Endothelial cell of umbilical vein (primary cell): ENCODE measurements at regions of chr9 and their contacts with region 1.

Region 1: DNA sequence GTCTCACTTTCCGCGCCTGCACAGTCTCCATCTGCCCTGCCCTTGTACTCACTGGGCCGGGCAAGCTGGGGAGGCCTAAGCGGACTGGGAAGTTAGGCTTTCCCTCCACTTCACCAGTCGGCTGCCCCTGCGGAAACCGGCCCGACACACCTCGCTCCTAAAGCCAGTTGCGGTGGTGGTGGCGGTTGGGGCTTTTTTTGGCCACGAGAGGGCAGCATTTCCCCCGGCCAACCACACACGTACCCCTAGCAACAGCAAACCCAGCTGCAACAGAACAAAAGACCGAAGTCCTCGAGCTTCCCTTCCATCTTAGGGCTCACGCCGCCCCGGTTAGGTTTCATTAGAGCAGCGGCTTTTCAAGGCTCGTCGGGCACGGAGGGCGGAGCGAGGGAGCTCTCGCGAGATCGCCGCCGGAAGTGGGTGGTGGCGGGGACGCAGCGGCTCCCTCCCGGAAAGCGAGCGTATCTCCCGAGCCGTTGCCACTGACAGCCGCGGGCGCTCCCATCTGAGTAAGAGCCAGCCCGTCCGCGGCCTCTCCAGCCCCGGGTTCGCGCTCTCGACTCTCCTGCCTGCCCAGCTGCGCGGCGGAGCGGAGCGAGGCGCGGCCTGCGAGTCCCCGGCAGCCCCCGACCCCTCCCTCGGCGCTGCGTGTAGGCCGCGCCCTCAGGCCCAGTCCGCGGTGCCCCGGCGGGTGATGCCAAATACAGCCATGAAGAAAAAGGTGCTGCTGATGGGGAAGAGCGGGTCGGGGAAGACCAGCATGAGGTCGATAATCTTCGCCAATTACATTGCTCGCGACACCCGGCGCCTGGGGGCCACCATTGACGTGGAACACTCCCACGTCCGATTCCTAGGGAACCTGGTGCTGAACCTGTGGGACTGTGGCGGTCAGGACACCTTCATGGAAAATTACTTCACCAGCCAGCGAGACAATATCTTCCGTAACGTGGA is at the start of gene RRAGA:
- DNase-seq: peak; percentile 97
- H3K4me3 ChIP-seq: peak within 1 kb of the TSS; percentile 48 to 76 (median 53)
- H3K27ac ChIP-seq: peak within 1 kb of the TSS; percentile 69
- H3K4me1 ChIP-seq: peaks cover 16% of the 10 kb centered on the region
- H3K27me3 ChIP-seq: no peaks in the 10 kb centered on the region
- CTCF ChIP-seq: peak; percentile 81 to 91
- POLR2A ChIP-seq: peak; percentile 97
- total RNA-seq, gene RRAGA: 78.5 and 81.2 TPM in 2 replicates

Region 2: DNA sequence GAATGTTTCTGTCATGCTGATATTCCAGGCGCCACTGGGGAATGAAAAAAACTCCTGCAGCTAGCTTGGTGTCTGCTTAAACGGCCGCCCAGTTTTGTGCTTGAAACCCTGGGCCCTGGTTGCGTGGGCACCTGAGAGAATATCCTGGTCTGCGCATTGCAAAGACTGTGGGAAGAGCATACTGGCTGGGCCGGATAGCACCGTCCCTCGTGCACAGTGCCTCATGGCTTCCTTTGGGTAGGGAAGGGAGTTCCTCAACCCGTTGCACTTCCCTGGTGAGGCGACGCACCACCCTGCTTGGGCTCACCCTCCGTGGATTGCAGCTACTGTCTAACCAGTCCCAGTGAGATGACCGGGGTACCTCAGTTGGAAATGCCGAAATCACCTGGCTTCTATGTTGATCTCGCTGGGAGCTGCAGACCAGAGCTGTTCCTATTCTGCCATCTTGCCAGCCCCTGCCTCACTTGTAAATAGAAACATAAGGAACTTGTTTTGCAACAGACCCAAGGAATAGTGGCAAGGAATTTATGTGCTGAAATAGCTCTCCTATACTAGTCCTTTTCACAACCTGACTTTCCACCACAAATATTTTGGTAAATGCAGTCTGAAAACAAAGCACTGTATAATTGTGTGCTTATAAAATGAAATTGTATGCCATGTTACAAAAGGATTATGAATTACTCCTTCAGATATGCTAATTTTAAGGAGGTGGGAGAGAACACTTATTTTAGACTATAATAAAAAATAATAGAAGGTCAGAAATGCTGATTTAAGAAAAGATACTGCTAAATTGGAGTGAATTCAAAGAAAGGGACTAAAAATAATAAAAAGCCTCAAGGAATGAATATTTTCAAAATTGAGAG is 485.0 kb before region 1 on chr9:
- CTCF ChIA-PET with region 1: no interaction called
- POLR2A ChIA-PET with region 1: no interaction called
- dilution Hi-C with region 1: no loop called
- intact Hi-C with region 1: no loop called
- DNase-seq: no peak
- H3K4me3 ChIP-seq: no peak overlapping the region
- H3K27ac ChIP-seq: no peak overlapping the region
- H3K4me1 ChIP-seq: peaks cover 20% of the 10 kb centered on the region
- H3K27me3 ChIP-seq: no peaks in the 10 kb centered on the region
- CTCF ChIP-seq: no peak
- POLR2A ChIP-seq: no peak

Region 3: GRCh38 chr9:18951936-18952335 is 97.3 kb before region 1 on chr9:
- CTCF ChIA-PET with region 1: no interaction called
- POLR2A ChIA-PET with region 1: no interaction called
- dilution Hi-C with region 1: no loop called
- intact Hi-C with region 1: no loop called
- DNase-seq: no peak
- H3K4me3 ChIP-seq: no peak overlapping the region
- H3K27ac ChIP-seq: no peak overlapping the region
- H3K4me1 ChIP-seq: no peaks in the 10 kb centered on the region
- H3K27me3 ChIP-seq: peaks cover 6% of the 10 kb centered on the region in 2 experiments
- CTCF ChIP-seq: no peak
- POLR2A ChIP-seq: no peak

Region 4: DNA sequence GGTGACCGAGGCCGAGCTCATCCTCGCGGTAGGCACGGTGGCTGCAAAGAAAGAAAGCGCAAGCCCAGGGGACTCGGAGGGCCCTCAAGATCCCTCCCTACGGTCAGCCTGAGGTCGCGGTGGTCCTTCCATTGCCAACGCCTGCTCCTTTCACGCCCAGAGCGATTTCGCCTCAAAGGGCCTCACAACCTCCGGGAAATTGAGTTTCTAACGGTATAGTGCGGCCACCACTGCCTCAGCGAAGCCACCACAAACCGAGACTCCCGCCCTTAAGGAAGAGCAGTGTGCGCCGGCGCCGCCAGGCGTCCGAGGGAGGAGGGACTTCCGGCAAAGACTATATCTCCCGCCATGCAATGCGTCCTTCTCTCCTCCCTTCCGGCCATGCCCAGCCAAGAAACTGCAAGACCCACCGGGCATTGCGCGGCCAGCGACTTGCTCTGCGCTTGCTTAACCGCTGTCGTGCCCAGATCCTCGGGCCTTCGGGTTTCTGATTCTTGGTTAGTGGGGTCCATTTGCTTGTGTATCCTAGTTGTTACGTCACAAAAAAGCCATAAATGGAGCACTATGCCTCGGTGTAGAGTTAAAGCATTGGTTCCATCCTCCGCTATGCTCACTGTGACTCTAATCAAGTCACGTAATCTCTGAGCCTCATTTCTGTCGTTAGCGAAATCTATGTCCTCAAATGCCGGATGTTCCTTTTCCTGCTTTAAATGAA is 53.5 kb after region 1 on chr9 and contains the start of gene HAUS6:
- CTCF ChIA-PET with region 1: interaction called, 4 read pairs
- POLR2A ChIA-PET with region 1: no interaction called
- dilution Hi-C with region 1: no loop called
- intact Hi-C with region 1: loop called (anchors 2 kb)
- DNase-seq: peak; percentile 98
- H3K4me3 ChIP-seq: peak within 1 kb of the TSS; percentile 85 to 93 (median 87)
- H3K27ac ChIP-seq: peak within 1 kb of the TSS; percentile 52
- H3K4me1 ChIP-seq: peaks cover 8% of the 10 kb centered on the region
- H3K27me3 ChIP-seq: no peaks in the 10 kb centered on the region
- CTCF ChIP-seq: peak; percentile 7 to 63
- POLR2A ChIP-seq: peak; percentile 85
- total RNA-seq, gene HAUS6: 18.9 and 19.6 TPM in 2 replicates

Region 5: GRCh38 chr9:19230356-19231125 is 181.3 kb after region 1 on chr9 and contains the start of gene DENND4C:
- CTCF ChIA-PET with region 1: interaction called, 4 read pairs
- POLR2A ChIA-PET with region 1: interaction called, 3 read pairs
- dilution Hi-C with region 1: no loop called
- intact Hi-C with region 1: loop called (anchors 1 kb)
- DNase-seq: peak; percentile 90
- H3K4me3 ChIP-seq: peak within 1 kb of the TSS; percentile 65 to 99 (median 97)
- H3K27ac ChIP-seq: peak within 1 kb of the TSS; percentile 86
- H3K4me1 ChIP-seq: peaks cover 19% of the 10 kb centered on the region
- H3K27me3 ChIP-seq: no peaks in the 10 kb centered on the region
- CTCF ChIP-seq: no peak
- POLR2A ChIP-seq: peak; percentile 87
- total RNA-seq, gene DENND4C: 36.5 and 36.8 TPM in 2 replicates

Region 6: DNA sequence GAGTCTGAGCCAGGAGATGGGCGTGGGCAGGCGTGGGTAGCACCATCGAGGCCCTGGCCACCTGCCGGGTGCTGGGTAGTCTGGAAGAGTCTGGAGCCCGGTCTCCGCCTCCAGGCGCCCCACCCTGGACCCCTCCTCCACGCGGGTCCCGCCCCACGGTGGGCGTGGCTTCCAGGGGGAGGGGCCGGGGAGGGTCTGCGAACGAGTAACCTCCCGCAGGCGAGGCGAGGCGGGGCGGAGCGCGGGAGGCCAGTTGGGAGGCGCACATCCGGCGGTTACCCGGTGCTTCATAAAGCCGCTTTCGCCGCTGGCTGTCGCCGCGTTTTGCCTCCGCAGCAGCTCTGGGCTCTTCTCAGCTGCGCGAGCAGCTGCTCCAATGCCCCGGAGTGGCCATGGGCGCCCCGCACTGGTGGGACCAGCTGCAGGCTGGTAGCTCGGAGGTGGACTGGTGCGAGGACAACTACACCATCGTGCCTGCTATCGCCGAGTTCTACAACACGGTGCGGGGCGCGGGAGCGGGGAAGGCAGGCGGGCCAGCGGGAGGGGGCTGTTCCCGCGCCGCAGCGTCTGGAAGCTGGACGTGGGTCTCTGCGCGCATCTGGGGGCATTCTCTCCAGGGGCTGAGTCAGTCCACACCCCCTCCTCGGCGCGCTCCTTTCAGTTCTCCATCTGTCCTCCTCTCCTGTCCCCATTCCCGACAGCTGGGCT is 359.6 kb after region 1 on chr9 and contains the start of gene ACER2:
- CTCF ChIA-PET with region 1: no interaction called
- POLR2A ChIA-PET with region 1: no interaction called
- dilution Hi-C with region 1: no loop called
- intact Hi-C with region 1: loop called (anchors 1 kb)
- DNase-seq: peak; percentile 95
- H3K4me3 ChIP-seq: peak within 1 kb of the TSS; percentile 82 to 91 (median 84)
- H3K27ac ChIP-seq: peak within 1 kb of the TSS; percentile 19
- H3K4me1 ChIP-seq: peaks cover 21% of the 10 kb centered on the region
- H3K27me3 ChIP-seq: no peaks in the 10 kb centered on the region
- CTCF ChIP-seq: peak in 1 of 2 donors; percentile 41
- POLR2A ChIP-seq: peak; percentile 95
- total RNA-seq, gene ACER2: 7.3 and 7.7 TPM in 2 replicates

Region 7: GRCh38 chr9:19464764-19465585 is 415.7 kb after region 1 on chr9:
- CTCF ChIA-PET with region 1: interaction called, 34 read pairs
- POLR2A ChIA-PET with region 1: no interaction called
- dilution Hi-C with region 1: no loop called
- intact Hi-C with region 1: no loop called
- DNase-seq: peak; percentile 63
- H3K4me3 ChIP-seq: peak overlapping the region; percentile 13 to 27 (median 19)
- H3K27ac ChIP-seq: no peak overlapping the region
- H3K4me1 ChIP-seq: peaks cover 2% of the 10 kb centered on the region
- H3K27me3 ChIP-seq: peaks cover 2% of the 10 kb centered on the region in 2 experiments
- CTCF ChIP-seq: peak; percentile 71 to 77
- POLR2A ChIP-seq: no peak